Endothelial cell of umbilical vein (primary cell): ENCODE measurements at regions of chr7 and their contacts with region 1.

Region 1: DNA sequence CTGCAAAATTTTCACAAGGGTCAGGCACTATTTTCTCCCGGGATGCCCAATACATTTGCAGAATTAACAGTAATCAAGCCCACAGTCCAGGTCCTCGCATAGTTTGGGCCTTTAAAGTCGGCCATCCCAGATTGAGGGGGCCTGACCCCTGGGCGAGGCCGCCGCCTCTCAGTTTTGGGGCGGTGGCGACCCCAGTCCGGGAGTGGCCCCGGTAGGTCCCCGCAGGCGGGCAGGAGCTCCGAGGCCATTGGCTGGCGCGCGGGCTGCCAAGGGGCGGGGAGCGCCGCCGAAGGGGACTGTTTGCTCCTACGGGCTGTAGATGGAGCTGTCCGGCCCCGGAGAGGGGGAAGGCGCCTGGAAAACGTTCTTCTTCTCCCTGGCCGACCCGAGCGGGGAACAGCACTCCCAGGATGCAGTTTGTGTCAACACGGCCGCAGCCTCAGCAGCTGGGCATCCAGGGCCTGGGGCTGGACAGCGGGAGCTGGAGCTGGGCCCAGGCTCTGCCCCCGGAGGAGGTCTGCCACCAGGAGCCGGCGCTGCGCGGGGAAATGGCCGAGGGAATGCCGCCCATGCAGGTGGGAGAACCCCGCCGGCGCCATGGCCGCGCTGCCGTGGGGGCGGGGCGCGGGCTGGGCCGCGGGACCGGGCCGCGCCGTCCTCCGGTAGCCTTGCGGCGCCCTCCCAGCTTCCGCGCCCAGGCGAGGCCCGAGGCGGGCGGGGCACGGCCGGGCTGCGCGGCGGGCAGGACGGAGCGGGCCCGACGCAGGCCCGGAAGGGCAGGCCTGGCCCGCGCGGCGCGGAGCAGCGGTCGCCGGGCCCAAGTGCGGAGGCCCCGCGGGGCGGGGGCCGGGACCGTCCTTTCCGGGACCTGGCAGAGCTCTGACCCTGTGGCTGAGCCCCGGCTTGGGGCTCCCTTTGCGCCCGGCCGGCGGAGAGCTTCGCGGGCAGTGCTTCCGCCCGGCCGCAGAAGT is at the start of gene ZNF282:
- DNase-seq: peak; percentile 91
- H3K4me3 ChIP-seq: peak within 1 kb of the TSS; percentile 70 to 83 (median 78)
- H3K27ac ChIP-seq: peak within 1 kb of the TSS; percentile 61
- H3K4me1 ChIP-seq: peaks cover 25% of the 10 kb centered on the region
- H3K27me3 ChIP-seq: peaks cover 0 to 2% of the 10 kb centered on the region in 2 experiments
- CTCF ChIP-seq: peak; percentile 75 to 79
- POLR2A ChIP-seq: peak; percentile 90
- total RNA-seq, gene ZNF282: 34.4 and 36.0 TPM in 2 replicates

Region 2: DNA sequence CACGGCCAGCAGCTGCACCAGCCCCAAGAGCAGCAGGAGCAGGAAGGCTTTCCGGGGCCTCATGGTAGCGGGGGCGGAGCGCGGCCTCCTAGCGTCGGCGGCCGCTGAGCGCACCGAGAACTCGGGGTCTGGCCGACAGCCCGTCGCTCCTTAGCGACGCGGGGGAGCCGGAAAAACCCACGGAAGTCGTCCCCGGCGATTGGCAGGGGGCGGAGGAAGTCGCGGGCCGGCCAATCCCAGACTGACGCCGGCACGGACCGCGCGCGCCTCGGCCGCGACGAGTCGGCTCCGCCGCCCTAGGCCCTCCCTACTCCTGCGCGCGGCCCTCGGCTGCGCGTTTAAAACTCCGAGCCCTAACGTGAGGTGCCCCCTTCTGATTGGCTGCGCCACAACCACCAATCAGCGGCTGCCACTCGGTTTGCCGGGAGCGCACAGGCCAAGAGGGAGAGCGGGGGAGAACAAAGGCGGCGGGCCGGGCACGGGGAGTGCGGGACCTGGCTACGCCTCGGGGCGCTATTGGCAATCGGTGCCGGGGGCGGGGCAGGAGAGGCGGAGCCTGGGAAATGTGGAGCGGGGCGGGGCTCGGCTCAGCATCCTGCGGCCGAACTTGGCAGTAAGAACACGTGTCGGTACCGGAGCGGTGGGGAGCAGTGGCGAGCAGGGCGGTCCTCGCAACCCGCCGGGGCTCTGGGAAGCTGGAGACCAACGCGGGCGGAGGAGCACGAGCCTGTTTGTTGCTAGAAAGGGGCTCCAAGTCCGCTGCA is 166.9 kb before region 1 on chr7 and contains the start of gene PDIA4:
- CTCF ChIA-PET with region 1: no interaction called
- POLR2A ChIA-PET with region 1: no interaction called
- dilution Hi-C with region 1: no loop called
- intact Hi-C with region 1: loop called (anchors 2 kb)
- DNase-seq: peak; percentile 100
- H3K4me3 ChIP-seq: peak within 1 kb of the TSS; percentile 80 to 91 (median 90)
- H3K27ac ChIP-seq: peak within 1 kb of the TSS; percentile 56
- H3K4me1 ChIP-seq: peaks cover 12% of the 10 kb centered on the region
- H3K27me3 ChIP-seq: no peaks in the 10 kb centered on the region
- CTCF ChIP-seq: peak in 1 of 2 donors; percentile 50
- POLR2A ChIP-seq: peak; percentile 73
- total RNA-seq, gene PDIA4: 306 and 308 TPM in 2 replicates

Region 3: DNA sequence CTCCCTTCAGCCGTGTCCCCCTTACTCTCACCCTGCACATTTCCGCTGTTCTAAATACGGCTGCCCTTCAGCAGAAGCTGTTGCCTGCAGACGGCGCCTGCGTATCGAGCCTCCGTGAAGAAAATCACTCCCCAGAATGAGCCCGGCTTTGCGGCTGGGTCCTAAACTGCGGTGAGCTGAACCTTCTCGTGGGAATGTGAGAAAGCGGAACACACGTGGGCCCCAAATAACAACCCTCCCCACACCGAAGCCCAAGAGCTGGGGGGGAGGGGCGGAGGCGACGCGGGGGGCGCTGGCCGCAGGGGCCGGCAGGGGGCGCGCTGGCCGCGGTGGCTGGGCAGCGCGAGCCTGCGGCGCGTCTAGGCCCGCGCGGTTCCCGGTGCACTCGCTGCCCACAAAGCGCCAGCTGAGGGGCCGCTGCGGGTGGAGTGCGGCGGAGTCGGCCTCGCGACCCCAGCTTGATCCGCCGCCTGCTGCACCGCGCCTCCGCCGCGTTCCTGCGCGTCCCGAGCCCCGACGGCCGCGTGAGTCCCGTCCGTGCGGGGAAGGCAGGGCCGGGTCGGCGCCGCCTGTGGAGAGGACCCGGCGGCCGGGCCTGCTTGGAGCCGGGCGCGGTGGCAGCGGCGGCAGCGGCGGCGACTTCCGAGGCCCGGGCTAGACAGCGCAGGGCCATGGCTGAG is 48.3 kb before region 1 on chr7 and contains the start of gene ZNF398:
- CTCF ChIA-PET with region 1: interaction called, 18 read pairs
- POLR2A ChIA-PET with region 1: no interaction called
- dilution Hi-C with region 1: no loop called
- intact Hi-C with region 1: loop called (anchors 1 kb)
- DNase-seq: peak; percentile 75
- H3K4me3 ChIP-seq: peak within 1 kb of the TSS; percentile 74 to 98 (median 87)
- H3K27ac ChIP-seq: peak within 1 kb of the TSS; percentile 57
- H3K4me1 ChIP-seq: peaks cover 4% of the 10 kb centered on the region
- H3K27me3 ChIP-seq: no peaks in the 10 kb centered on the region
- CTCF ChIP-seq: peak; percentile 42 to 79
- POLR2A ChIP-seq: peak; percentile 63
- total RNA-seq, gene ZNF398: 8.6 and 10.6 TPM in 2 replicates

Region 4: GRCh38 chr7:149209518-149210269 is 14.2 kb after region 1 on chr7:
- CTCF ChIA-PET with region 1: interaction called, 21 read pairs
- POLR2A ChIA-PET with region 1: no interaction called
- dilution Hi-C with region 1: no loop called
- intact Hi-C with region 1: no loop called
- DNase-seq: peak; percentile 59
- H3K4me3 ChIP-seq: no peak overlapping the region
- H3K27ac ChIP-seq: peak overlapping the region; percentile 28
- H3K4me1 ChIP-seq: peaks cover 4% of the 10 kb centered on the region
- H3K27me3 ChIP-seq: no peaks in the 10 kb centered on the region
- CTCF ChIP-seq: peak; percentile 73 to 82
- POLR2A ChIP-seq: no peak

Region 5: DNA sequence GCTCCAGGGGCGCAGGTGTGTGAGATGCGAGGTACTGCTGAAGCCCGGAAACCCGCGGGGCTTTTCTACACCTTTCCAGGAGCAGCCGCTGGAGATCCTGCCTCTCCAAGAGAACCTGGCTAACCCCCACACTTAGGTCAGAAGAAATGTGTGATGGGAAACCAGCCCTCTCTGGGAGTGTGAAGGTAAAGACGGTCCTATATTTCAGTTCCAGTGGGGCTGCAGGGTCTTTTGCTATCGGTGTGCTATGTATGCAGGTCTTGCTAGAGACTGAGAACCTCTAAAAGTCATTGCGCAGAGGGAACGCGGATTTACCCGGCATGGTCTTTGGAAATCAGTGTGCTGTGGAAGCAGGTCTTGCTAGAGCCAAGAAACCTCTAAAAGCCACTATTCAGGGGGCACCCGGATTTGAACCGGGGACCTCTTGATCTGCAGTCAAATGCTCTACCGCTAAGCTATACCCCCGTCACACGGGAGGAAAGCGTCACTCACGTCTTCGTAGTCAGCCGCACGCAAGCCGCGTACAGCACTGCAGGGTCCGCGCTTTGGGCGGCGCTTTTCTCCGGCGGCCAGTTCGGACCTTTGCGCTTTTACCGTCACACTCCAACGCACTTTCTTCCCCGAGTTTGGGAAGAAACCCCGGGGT is 219.4 kb after region 1 on chr7:
- CTCF ChIA-PET with region 1: no interaction called
- POLR2A ChIA-PET with region 1: no interaction called
- dilution Hi-C with region 1: no loop called
- intact Hi-C with region 1: loop called (anchors 1 kb)
- DNase-seq: peak; percentile 71
- H3K4me3 ChIP-seq: peak overlapping the region; percentile 18 to 27 (median 20)
- H3K27ac ChIP-seq: no peak overlapping the region
- H3K4me1 ChIP-seq: peaks cover 7% of the 10 kb centered on the region
- H3K27me3 ChIP-seq: peaks cover 0 to 3% of the 10 kb centered on the region in 2 experiments
- CTCF ChIP-seq: no peak
- POLR2A ChIP-seq: no peak